Thyroid gland (tissue), 4 donors: ENCODE measurements at regions of chr1 and their contacts with region 1.

Region 1: GRCh38 chr1:161098210-161099068 is at the start of gene KLHDC9:
- DNase-seq: peak; percentile 93 to 94
- H3K4me3 ChIP-seq: peak within 1 kb of the TSS; percentile 51 to 70 (median 66)
- H3K27ac ChIP-seq: peak within 1 kb of the TSS in 2 of 3 donors; percentile 54 to 68
- H3K4me1 ChIP-seq: peaks cover 7 to 8% of the 10 kb centered on the region in 2 donors
- H3K27me3 ChIP-seq: no peaks in the 10 kb centered on the region
- CTCF ChIP-seq: peak in 1 of 6 experiments; percentile 33
- POLR2A ChIP-seq: peak in 1 of 2 donors; percentile 36
- total RNA-seq, gene KLHDC9: 6.9 to 31.8 (median 19.2) TPM

Region 2: GRCh38 chr1:160830321-160831153 is 267.9 kb before region 1 on chr1:
- intact Hi-C with region 1: loop called (anchors 10 kb)
- DNase-seq: peak; percentile 71 to 80
- H3K4me3 ChIP-seq: no peak overlapping the region
- H3K27ac ChIP-seq: no peak overlapping the region
- H3K4me1 ChIP-seq: no peaks in the 10 kb centered on the region
- H3K27me3 ChIP-seq: no peaks in the 10 kb centered on the region
- CTCF ChIP-seq: peak in 4 of 6 experiments; percentile 43 to 60 (median 52)
- POLR2A ChIP-seq: no peak

Region 3: GRCh38 chr1:160997323-160998038 is 101.0 kb before region 1 on chr1:
- intact Hi-C with region 1: loop called (anchors 5 kb)
- DNase-seq: peak; percentile 64 to 66
- H3K4me3 ChIP-seq: no peak overlapping the region
- H3K27ac ChIP-seq: peak overlapping the region in 2 of 3 donors; percentile 36 to 38
- H3K4me1 ChIP-seq: peaks cover 16 to 26% of the 10 kb centered on the region in 2 donors
- H3K27me3 ChIP-seq: no peaks in the 10 kb centered on the region
- CTCF ChIP-seq: peak in 5 of 6 experiments; percentile 23 to 65 (median 46)
- POLR2A ChIP-seq: no peak

Region 4: DNA sequence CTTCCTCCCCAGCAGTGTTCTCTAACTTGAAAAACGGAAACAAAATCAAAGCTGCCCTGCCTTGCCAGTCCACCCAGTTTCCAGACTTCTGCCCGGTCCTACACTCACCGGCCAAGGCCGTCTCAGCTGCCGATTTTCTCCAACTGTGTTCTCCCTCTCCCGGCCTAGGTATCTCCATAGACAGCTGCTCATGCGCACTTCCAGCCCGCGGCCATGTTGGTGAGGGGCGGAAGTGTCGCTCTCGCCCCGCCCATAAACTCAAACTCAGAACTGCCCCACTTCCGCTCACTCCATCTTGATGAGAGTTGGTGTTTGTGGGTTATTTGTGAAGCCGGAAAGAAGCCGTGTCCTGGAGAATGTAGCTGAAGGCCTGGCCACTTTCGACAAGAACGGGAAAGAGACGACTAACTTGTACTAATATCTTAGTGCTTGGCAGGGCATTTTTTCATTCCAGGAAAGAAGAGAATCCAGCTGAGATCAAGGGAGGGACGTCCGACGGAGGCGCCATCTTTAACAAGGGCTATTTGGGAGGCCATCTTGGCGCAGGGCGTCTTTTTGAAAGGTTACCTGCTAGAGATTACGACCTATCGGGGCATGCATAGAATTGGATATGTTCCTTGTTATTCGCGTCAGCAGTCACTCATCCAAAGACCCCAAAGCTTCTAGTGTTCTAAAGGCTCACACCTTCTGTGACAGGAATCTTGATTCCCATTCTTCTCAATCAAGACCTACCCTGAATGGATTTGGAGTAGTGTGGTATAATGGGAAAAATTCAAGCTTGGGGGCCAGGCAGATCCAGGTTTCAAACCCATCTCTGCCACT is 52.5 kb before region 1 on chr1 and contains the start of gene USF1:
- intact Hi-C with region 1: loop called (anchors 10 kb)
- DNase-seq: peak; percentile 94
- H3K4me3 ChIP-seq: peak within 1 kb of the TSS; percentile 29 to 91 (median 89)
- H3K27ac ChIP-seq: peak within 1 kb of the TSS; percentile 71 to 97 (median 97)
- H3K4me1 ChIP-seq: peaks cover 9 to 17% of the 10 kb centered on the region in 2 donors
- H3K27me3 ChIP-seq: no peaks in the 10 kb centered on the region
- CTCF ChIP-seq: no peak
- POLR2A ChIP-seq: peak in 1 of 2 donors; percentile 92
- total RNA-seq, gene USF1: 56.0 to 71.0 (median 70.3) TPM